ENCODE measurements at regions of chr4 and their contacts with region 1.

Region 1: DNA sequence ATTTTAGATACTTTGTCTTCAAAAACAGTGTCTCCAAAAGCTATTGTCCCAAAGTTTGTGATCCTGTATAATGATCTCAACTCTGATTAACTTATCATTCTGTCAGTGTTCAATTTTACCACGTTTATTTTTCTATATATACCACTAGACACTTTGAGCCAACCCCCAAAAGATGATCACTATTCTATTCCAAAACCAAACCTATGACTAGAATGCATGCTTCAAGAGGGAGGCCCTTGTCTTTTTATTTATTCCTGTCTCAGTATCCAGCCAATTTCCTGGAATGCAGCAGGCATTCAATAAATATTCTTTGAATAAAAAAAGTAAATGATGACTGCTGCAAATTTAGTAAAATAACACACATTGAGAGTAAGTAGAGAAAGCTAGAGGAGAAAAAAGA is 275.6 kb downstream of the LDB2 start:
- DNase-seq: no peak
- H3K4me3 ChIP-seq: no peak overlapping the region
- H3K27ac ChIP-seq: no peak overlapping the region
- H3K4me1 ChIP-seq: no peaks in the 10 kb centered on the region
- H3K27me3 ChIP-seq: no peaks in the 10 kb centered on the region
- CTCF ChIP-seq: no peak
- POLR2A ChIP-seq: no peak

Region 2: DNA sequence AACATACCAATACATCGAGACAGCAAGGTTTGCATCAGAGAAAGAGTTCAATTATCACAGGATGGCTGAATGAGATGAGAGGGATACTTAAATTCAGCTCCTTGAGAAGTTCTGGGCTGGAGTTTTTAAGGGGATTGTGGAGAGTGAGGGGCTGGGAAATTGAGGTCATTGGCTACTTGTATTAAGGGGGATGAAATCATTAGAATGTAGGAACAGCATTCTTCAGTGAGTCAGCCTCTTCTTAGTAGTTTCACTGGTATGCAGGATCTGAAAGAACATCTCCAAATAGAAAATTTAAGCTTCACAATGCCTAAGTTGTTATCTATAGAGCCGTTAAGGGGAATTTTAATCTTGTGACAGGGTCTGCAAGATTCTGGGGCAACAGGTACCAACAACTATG is 185.0 kb before region 1 on chr4:
- intact Hi-C with region 1: no loop called
- DNase-seq: no peak
- H3K4me3 ChIP-seq: no peak overlapping the region
- H3K27ac ChIP-seq: no peak overlapping the region
- H3K4me1 ChIP-seq: no peaks in the 10 kb centered on the region
- H3K27me3 ChIP-seq: no peaks in the 10 kb centered on the region
- CTCF ChIP-seq: no peak
- POLR2A ChIP-seq: no peak

Region 3: DNA sequence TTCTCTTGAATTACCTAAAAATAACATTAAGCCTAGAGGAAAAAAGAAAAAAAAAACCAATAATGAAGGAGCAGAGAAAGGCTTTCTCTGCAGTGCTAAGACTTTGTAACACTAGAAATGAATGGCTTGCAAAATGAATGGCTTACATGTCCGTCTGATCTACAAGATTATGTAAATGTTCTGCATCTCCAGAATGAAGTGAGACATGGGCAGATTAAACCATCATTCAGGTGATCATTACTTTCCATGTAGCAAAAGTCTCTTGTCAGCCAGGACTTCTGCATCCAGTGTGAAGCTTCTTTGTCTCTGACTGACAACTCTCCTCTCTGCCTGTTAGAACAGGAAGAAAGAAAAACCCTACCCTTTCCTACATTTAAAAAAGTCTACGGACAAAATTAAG is 28.7 kb before region 1 on chr4:
- intact Hi-C with region 1: loop called (anchors 2 kb)
- DNase-seq: no peak
- H3K4me3 ChIP-seq: no peak overlapping the region
- H3K27ac ChIP-seq: no peak overlapping the region
- H3K4me1 ChIP-seq: no peaks in the 10 kb centered on the region
- H3K27me3 ChIP-seq: no peaks in the 10 kb centered on the region
- CTCF ChIP-seq: no peak
- POLR2A ChIP-seq: no peak

Region 4: GRCh38 chr4:16636912-16637630 is 14.2 kb after region 1 on chr4:
- intact Hi-C with region 1: no loop called
- DNase-seq: no peak
- H3K4me3 ChIP-seq: no peak overlapping the region
- H3K27ac ChIP-seq: no peak overlapping the region
- H3K4me1 ChIP-seq: no peaks in the 10 kb centered on the region
- H3K27me3 ChIP-seq: no peaks in the 10 kb centered on the region
- CTCF ChIP-seq: no peak
- POLR2A ChIP-seq: no peak